ENCODE measurements at regions of chr11 and their contacts with region 1.

Region 1: DNA sequence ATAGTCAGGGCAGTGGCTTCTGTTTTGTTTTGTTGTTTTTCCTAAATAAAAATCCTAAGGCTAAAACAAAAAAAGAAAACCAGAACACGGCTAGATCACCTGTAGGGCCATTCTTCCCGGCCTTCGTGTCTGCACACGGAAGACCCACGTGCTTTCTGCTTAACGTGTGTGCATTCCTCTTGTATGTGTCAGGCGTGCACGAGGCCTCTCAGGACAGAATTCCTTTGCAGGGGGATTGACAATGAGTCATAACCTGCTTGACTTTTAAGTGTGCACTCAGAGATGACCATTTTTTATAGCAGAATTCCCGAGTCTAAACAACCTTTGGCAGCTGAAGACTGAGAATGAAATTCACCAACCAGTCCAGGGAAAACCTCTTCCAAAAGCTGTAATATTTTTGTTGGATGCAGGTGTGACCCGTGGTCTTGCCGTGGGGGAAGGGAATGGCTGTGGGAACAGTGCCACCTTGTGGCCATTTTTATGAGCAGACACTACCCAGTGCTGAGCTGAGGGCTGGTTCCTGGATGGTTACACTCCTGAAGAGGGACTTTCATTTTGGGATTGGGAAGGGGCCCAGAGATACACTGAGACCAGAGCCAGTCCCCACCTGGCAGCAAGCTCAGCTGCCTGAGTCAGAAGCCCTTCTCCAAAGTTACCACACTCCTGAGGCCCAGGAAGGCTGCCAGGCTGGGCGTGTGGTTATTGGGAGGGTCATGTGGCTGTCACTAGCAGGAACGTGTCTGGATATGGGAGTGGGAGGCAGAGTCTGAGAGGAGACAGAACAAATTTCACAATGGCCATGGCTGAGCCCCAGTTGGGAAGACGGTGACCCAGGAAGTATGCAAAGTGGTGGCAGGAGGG is 35.8 kb upstream of the DKK3 start:
- DNase-seq: peak; percentile 69 to 89
- H3K4me3 ChIP-seq: peak overlapping the region; percentile 16; the same call in 1 of the 2 replicates
- H3K27ac ChIP-seq: peak overlapping the region; percentile 69
- H3K4me1 ChIP-seq: peaks cover 29% of the 10 kb centered on the region
- H3K27me3 ChIP-seq: no peaks in the 10 kb centered on the region
- CTCF ChIP-seq: peak; percentile 89

Region 2: GRCh38 chr11:10933455-10934292 is 1110.5 kb before region 1 on chr11:
- CTCF ChIA-PET with region 1: interaction called, 3 read pairs
- POLR2A ChIA-PET with region 1: no interaction called
- intact Hi-C with region 1: loop called (anchors 10 kb)
- DNase-seq: peak; percentile 77 to 79
- H3K4me3 ChIP-seq: peak overlapping the region; percentile 60
- H3K27ac ChIP-seq: no peak overlapping the region; the same call in 1 of the 2 replicates
- H3K4me1 ChIP-seq: peaks cover 9% of the 10 kb centered on the region; the same call in 1 of the 2 replicates
- H3K27me3 ChIP-seq: no peaks in the 10 kb centered on the region
- CTCF ChIP-seq: peak; percentile 85

Region 3: DNA sequence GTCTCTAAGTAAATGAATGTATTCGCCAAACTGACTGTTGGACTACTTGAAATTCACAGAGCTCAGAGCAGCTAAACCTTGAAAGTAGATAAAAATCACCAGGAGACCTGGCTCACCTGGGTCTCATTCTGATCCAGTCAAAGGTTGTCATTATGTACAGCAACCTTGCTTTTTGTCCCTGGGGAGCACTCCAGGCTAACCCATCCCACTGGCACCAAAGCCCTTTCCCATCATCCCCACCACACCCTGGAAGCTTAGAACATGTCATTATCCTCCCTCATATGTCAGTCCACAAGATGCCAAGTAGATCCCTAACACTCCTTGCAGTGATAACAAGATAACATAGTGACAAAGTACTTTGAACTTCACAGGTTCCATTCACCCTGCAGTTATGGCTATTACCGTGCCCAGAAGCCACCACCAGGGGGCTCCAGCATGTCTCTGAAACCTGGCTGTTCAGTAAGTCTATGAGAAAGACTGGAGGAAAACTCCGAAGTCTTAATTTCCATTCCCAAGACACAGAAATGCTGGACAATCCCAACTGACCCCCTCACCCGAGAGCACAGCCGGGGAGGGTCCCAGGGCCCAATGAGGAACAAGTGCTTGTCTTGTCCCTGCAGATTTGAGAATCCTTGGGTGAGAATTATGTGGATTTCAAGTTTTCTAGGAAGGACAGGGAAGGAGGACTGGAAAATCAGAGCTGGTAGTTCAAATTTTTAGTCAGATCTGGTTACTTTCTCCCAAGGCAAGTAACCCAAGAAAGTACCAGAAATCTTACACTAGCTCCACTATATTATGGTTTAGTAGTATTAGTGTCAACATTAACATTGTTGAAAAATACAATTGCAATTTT is 245.4 kb before region 1 on chr11:
- CTCF ChIA-PET with region 1: no interaction called
- POLR2A ChIA-PET with region 1: no interaction called
- intact Hi-C with region 1: loop called (anchors 2 kb)
- DNase-seq: peak in 1 of 2 experiments; percentile 59
- H3K4me3 ChIP-seq: no peak overlapping the region
- H3K27ac ChIP-seq: no peak overlapping the region
- H3K4me1 ChIP-seq: no peaks in the 10 kb centered on the region
- H3K27me3 ChIP-seq: no peaks in the 10 kb centered on the region
- CTCF ChIP-seq: peak; percentile 84

Region 4: DNA sequence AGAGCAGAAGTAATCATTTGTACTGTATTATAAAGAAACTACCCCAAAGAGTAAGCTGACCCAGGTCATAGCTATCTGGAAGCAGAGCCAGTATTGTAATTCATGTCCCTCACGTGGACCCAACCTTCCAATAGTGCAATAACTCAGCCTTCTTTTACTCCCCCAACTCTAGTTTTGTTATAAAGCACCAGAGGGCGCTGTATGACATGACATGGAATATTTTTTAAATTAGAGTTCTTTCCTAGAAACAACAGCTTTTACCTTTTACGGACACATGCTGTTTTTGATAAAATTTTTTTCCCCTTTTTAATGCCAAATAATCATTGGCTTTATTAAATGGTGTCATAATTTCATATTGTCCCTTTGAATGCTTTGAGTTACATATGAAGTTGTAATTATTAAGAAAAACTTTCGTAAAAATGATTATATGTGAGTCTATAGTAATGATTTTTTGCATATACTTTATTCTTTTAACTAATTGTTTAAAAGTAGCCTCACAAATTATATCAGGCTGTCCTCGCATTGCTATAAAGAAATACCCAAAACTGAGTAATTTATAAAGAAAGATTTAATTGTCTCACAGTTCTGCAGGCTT is 112.6 kb before region 1 on chr11:
- CTCF ChIA-PET with region 1: interaction called, 6 read pairs
- POLR2A ChIA-PET with region 1: no interaction called
- intact Hi-C with region 1: loop called (anchors 1 kb)
- DNase-seq: peak in 1 of 2 experiments; percentile 2
- H3K4me3 ChIP-seq: no peak overlapping the region
- H3K27ac ChIP-seq: no peak overlapping the region
- H3K4me1 ChIP-seq: no peaks in the 10 kb centered on the region
- H3K27me3 ChIP-seq: no peaks in the 10 kb centered on the region
- CTCF ChIP-seq: peak; percentile 77

Region 5: GRCh38 chr11:12235947-12236743 is 192.0 kb after region 1 on chr11:
- CTCF ChIA-PET with region 1: interaction called, 4 read pairs
- POLR2A ChIA-PET with region 1: no interaction called
- intact Hi-C with region 1: loop called (anchors 1 kb)
- DNase-seq: no peak
- H3K4me3 ChIP-seq: no peak overlapping the region
- H3K27ac ChIP-seq: no peak overlapping the region
- H3K4me1 ChIP-seq: peaks cover 13% of the 10 kb centered on the region
- H3K27me3 ChIP-seq: no peaks in the 10 kb centered on the region
- CTCF ChIP-seq: peak; percentile 72

Region 6: DNA sequence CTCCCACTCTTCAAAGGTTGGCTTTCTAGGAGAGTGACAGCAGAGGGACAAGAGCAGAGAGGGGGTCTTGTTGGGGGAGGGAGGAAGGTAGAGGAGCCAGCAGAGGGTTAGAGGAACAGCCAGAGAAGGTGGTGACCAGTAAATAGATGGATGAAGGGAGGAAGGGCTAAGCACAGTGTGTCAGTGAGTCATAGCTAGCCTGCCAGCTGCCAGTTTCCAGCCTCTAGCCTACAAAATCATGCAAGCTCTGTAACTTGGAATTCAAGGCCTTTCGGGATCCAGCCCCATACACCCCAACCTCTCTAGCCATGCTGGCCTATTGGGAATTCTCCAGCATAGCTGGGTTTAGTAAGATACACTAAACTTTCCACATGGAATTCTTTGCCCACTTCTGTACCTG is 482.6 kb after region 1 on chr11:
- CTCF ChIA-PET with region 1: no interaction called
- POLR2A ChIA-PET with region 1: no interaction called
- intact Hi-C with region 1: no loop called
- DNase-seq: no peak
- H3K4me3 ChIP-seq: no peak overlapping the region
- H3K27ac ChIP-seq: no peak overlapping the region
- H3K4me1 ChIP-seq: no peaks in the 10 kb centered on the region
- H3K27me3 ChIP-seq: no peaks in the 10 kb centered on the region
- CTCF ChIP-seq: no peak

Region 7: GRCh38 chr11:12893787-12894672 is 849.8 kb after region 1 on chr11:
- CTCF ChIA-PET with region 1: no interaction called
- POLR2A ChIA-PET with region 1: no interaction called
- intact Hi-C with region 1: loop called (anchors 2 kb)
- DNase-seq: peak; percentile 55 to 72
- H3K4me3 ChIP-seq: no peak overlapping the region
- H3K27ac ChIP-seq: no peak overlapping the region
- H3K4me1 ChIP-seq: no peaks in the 10 kb centered on the region
- H3K27me3 ChIP-seq: no peaks in the 10 kb centered on the region
- CTCF ChIP-seq: peak; percentile 85